Panc1 (cell line): ENCODE measurements at regions of chr3 and their contacts with region 1.

Region 1: DNA sequence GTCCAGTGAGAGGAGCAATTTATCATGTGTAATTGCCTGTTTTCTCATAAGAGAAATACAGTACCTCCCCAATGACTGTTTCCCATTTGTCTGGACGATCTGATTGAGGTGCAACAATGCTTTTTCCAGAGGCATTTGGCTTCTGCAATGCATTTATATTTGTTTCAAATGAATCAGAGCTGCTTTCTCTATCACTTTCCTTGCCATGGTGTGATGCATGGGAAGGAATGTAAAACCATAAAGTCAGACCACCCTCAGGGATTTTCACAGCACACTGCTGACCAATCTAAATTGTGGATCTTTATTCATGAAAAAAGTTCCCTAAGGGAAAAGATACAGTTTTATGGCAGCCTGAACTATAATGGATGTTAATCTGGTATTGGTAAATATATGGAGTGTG is 333.0 kb downstream of the ZNF385D start:
- DNase-seq: no peak
- ATAC-seq: no peak
- H3K4me3 ChIP-seq: no peak overlapping the region
- H3K27ac ChIP-seq: no peak overlapping the region
- H3K4me1 ChIP-seq: no peaks in the 10 kb centered on the region
- H3K27me3 ChIP-seq: no peaks in the 10 kb centered on the region
- CTCF ChIP-seq: no peak

Region 2: DNA sequence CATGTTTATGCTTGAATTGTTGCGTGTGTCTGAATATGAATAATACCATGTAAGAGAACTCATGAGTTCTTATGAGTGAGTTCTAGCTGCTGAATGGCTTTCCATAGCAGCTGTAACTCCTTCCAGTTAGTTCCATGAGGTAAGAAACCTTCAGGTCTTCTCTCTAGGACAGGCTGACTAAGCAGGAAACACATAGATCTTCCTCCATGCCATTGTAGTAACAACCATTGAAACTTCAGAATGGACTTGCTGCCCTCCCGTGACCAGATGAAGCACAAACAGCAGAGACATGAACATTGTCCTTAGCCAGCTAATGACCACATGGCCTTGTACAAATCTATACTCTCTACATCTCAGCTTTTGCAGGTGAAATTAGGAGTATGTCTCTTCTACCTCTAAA is 133.0 kb after region 1 on chr3:
- CTCF ChIA-PET with region 1: no interaction called
- POLR2A ChIA-PET with region 1: interaction called, 10 read pairs
- in situ Hi-C with region 1: no loop called
- intact Hi-C with region 1: no loop called
- DNase-seq: no peak
- ATAC-seq: no peak
- H3K4me3 ChIP-seq: no peak overlapping the region
- H3K27ac ChIP-seq: no peak overlapping the region
- H3K4me1 ChIP-seq: no peaks in the 10 kb centered on the region
- H3K27me3 ChIP-seq: no peaks in the 10 kb centered on the region
- CTCF ChIP-seq: peak; percentile 18; the same call in 1 of the 2 replicates